ENCODE measurements at regions of chr7 and their contacts with region 1.

Region 1: DNA sequence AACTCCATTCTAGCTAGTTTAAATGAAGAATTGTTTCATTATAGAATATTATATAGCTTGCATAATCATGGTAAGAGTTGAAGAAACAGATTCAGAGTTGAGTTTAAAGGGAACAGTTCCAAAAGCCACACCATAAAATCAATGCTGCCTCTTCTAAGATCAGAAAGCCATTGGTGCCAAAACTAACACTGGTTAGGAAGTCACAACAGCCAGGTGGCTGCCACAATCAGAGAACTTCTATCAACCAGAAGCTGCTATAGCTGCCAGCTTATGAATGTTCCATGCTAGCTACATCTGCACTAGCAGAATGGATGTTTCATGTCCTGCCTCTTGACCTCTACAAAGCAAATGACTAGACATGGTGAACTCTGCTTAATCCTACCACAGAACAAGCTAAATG is 583.1 kb upstream of the LRRN3 start:
- DNase-seq: no peak
- H3K4me3 ChIP-seq: no peak overlapping the region
- H3K27ac ChIP-seq: no peak overlapping the region
- H3K4me1 ChIP-seq: no peaks in the 10 kb centered on the region
- H3K27me3 ChIP-seq: no peaks in the 10 kb centered on the region
- CTCF ChIP-seq: no peak
- POLR2A ChIP-seq: no peak

Region 2: DNA sequence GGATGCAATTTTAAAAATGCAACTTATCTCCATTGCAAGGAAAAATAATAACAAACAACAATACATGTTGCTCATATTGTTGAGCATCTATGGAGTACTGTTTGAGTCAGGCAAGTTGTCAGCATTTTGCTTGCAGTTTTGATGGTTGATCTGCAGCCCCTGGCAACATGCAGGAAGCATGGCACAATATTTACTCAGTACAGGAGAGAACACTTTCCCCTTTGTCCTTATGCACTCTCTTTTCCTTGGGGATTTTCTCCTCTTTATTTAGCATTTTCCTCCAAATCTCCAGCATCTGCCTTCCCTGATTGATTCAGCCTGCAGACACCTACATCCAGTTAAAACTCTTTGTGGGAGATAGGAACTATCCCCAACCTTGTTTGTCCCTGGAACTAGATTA is 37.4 kb before region 1 on chr7:
- CTCF ChIA-PET with region 1: no interaction called
- POLR2A ChIA-PET with region 1: no interaction called
- dilution Hi-C with region 1: no loop called
- intact Hi-C with region 1: loop called (anchors 1 kb)
- DNase-seq: no peak
- H3K4me3 ChIP-seq: no peak overlapping the region
- H3K27ac ChIP-seq: no peak overlapping the region
- H3K4me1 ChIP-seq: no peaks in the 10 kb centered on the region
- H3K27me3 ChIP-seq: no peaks in the 10 kb centered on the region
- CTCF ChIP-seq: no peak
- POLR2A ChIP-seq: no peak

Measured in endothelial cell of umbilical vein (primary cell).